Esophagus muscularis mucosa (tissue), 4 donors: ENCODE measurements at regions of chr14 and their contacts with region 1.

Region 1: GRCh38 chr14:90235179-90235976 is 21.0 kb upstream of the PSMC1 start:
- DNase-seq: no peak
- H3K4me3 ChIP-seq: no peak overlapping the region
- H3K27ac ChIP-seq: no peak overlapping the region
- H3K4me1 ChIP-seq: peaks cover 0 to 5% (median 2%) of the 10 kb centered on the region in 4 donors
- H3K27me3 ChIP-seq: peaks cover 0 to 19% (median 0%) of the 10 kb centered on the region in 4 donors
- CTCF ChIP-seq: peak; percentile 78 to 87 (median 79)
- EP300 ChIP-seq: no peak
- POLR2A ChIP-seq: no peak

Region 2: DNA sequence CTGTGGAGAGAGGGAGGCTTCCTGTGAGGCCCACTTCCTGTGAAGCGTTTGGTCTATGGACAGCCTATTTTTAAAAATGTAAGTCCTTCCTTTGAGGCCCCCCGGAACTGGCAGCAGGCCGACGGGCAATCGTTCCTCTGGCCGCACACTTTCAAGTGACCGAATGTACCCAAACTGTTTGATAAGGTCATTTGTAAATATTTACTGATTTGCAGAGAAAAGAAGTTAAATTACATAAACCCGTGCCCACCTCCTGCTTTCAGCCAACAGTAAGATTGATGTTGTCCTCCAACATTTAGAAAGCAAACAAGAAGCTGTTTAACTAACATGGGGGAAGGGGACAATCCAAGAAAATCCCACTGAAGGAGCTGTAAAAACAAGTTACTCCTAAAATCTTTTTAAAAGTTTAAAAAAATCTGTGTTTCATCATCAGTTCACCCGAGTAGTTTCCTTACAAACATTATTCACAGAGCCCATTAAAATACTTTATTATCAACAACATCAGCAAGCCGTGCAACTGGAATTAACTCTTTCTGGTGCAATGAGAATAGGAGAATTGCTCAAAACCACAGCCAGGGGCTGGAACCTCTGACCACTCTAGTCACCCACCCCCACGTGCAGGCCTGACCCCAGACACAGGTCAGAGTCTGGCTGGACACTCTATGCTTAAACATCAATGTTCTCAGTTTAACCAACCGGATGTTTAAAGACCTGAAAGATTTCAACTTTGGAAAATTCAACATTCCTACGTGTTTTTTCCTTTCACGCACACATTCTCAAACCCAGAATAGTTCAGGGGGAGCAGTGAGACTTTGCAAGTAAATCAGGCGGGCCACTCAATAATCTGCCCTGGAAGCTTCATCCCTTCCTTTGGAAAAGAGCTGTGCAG is 883.6 kb before region 1 on chr14:
- intact Hi-C with region 1: no loop called
- DNase-seq: peak; percentile 89
- H3K4me3 ChIP-seq: peak overlapping the region in 1 of 4 donors; percentile 14
- H3K27ac ChIP-seq: peak overlapping the region; percentile 68 to 76 (median 71)
- H3K4me1 ChIP-seq: peaks cover 24 to 62% (median 46%) of the 10 kb centered on the region in 4 donors
- H3K27me3 ChIP-seq: no peaks in the 10 kb centered on the region
- CTCF ChIP-seq: no peak
- EP300 ChIP-seq: no peak
- POLR2A ChIP-seq: no peak

Region 3: DNA sequence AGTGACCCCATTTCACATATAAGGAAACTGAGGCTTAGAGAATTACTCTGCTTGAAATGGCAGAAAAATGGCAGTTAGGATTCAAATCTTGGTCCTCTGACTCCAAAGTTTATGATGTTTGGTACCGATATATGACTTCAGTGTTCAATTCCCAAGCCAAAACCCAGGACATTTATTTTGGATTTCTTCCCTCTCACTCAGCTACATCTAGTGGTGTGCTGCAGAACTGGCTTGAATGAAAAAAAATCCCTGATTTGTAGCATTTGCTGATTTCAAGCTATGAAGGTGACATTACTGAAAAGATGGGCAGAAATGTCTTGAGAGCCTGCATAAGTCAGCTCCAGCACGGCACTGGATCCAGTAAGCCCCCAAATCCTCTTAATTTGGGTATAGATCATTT is 387.2 kb before region 1 on chr14:
- intact Hi-C with region 1: no loop called
- DNase-seq: no peak
- H3K4me3 ChIP-seq: no peak overlapping the region
- H3K27ac ChIP-seq: no peak overlapping the region
- H3K4me1 ChIP-seq: peaks cover 0 to 13% (median 6%) of the 10 kb centered on the region in 4 donors
- H3K27me3 ChIP-seq: no peaks in the 10 kb centered on the region
- CTCF ChIP-seq: peak; percentile 25 to 46 (median 28)
- EP300 ChIP-seq: no peak
- POLR2A ChIP-seq: no peak

Region 4: GRCh38 chr14:89973234-89973823 is 262.0 kb before region 1 on chr14:
- intact Hi-C with region 1: loop called (anchors 10 kb)
- DNase-seq: no peak
- H3K4me3 ChIP-seq: no peak overlapping the region
- H3K27ac ChIP-seq: no peak overlapping the region
- H3K4me1 ChIP-seq: no peaks in the 10 kb centered on the region
- H3K27me3 ChIP-seq: no peaks in the 10 kb centered on the region
- CTCF ChIP-seq: peak; percentile 66 to 84 (median 72)
- EP300 ChIP-seq: no peak
- POLR2A ChIP-seq: no peak

Region 5: DNA sequence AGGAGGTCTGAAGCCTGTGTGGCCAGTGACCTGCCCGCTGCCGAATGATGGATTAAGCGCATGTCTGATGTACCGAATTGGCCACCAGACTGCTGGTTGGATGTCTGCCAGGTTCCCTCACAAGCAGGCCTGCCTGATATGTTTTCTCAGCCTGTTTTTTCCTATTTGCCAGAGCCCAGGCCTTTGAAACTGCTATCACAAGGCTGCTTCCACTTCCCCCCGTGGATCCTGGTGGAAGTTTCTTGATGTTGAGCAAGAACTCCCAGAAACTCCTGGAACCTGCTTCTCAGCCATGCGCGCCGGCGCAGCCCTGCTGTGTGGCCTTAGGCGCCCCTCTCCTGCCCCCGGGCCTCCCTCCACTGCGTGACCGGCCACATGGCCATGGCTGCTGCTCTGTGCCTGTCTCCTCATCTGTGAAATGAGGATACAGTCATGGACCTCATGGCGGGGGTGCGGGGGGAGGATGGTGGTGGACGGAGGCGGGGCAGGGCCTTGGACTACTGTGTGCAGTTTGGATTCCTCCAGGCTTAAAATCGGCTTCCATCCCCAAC is 218.1 kb after region 1 on chr14:
- intact Hi-C with region 1: no loop called
- DNase-seq: no peak
- H3K4me3 ChIP-seq: no peak overlapping the region
- H3K27ac ChIP-seq: peak overlapping the region in 3 of 4 donors; percentile 34 to 68 (median 52)
- H3K4me1 ChIP-seq: peaks cover 16 to 38% (median 32%) of the 10 kb centered on the region in 4 donors
- H3K27me3 ChIP-seq: no peaks in the 10 kb centered on the region
- CTCF ChIP-seq: no peak
- EP300 ChIP-seq: no peak
- POLR2A ChIP-seq: no peak

Region 6: DNA sequence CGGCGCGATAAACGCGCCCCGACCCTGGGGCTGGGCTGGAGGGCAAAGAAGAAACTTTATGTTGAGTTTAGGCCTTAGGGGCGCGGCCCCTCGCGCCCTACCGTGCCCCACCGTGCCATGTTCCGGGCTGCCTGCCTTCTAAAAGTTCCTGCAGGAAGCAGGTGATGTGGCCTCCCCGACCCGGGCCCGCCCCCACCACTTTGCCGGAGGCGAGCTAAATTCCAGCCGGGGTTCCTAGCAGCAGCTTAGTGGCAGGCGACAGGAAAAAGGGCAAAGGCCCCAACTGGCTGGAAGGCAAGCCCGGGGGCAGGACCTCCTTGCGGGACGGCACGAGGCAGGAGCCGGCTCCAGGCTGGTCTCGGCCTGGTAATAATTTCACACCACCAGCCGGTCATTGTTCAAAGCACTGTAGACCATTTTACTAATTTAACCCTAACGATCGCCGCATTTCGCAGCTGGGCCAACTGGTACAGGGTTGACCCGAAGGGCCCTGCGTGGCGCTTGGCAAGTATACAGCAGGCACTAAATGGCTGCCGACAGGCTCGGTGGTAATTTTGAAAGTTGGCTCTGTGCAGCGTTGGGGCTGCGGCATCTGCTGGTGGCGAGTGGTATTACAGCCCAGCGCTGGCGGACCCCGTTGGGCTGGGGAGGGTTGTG is 1183.1 kb after region 1 on chr14:
- intact Hi-C with region 1: no loop called
- DNase-seq: no peak
- H3K4me3 ChIP-seq: peak overlapping the region; percentile 56 to 72 (median 59)
- H3K27ac ChIP-seq: peak overlapping the region; percentile 11 to 48 (median 32)
- H3K4me1 ChIP-seq: peaks cover 13 to 24% (median 22%) of the 10 kb centered on the region in 4 donors
- H3K27me3 ChIP-seq: peaks cover 0 to 27% (median 3%) of the 10 kb centered on the region in 4 donors
- CTCF ChIP-seq: peak in 2 of 3 experiments; percentile 94 to 96
- EP300 ChIP-seq: no peak
- POLR2A ChIP-seq: no peak